ENCODE measurements at regions of chr1 and their contacts with region 1.

Region 1: DNA sequence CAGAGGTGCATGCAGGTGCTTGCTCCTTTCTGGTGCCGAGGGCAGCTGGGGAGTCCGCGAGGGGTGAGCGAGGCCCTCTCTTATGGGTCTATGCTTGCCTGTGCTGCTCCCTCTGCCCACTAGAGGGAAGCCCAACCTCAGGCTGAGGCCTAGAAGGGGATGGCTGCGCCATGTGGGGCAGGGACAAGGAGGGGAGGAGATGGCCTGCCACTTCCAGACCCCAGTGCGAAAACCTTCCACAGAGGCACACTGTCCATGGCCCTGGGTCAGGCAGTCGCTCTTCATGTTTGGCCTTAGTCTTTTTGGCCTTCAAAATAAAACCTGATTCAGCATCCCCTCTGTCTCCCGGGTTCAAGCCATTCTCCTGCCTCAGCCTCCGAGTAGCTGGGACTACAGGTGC is 14.0 kb downstream of the RHBG start:
- DNase-seq: peak in 1 of 2 donors; percentile 35
- ATAC-seq: peak in 1 of 2 donors; percentile 69
- H3K4me3 ChIP-seq: no peak overlapping the region
- H3K27ac ChIP-seq: no peak overlapping the region
- H3K4me1 ChIP-seq: no peaks in the 10 kb centered on the region
- H3K27me3 ChIP-seq: peaks cover 4 to 10% (median 4%) of the 10 kb centered on the region in 3 donors
- CTCF ChIP-seq: peak; percentile 43 to 71 (median 64)
- POLR2A ChIP-seq: no peak

Region 2: DNA sequence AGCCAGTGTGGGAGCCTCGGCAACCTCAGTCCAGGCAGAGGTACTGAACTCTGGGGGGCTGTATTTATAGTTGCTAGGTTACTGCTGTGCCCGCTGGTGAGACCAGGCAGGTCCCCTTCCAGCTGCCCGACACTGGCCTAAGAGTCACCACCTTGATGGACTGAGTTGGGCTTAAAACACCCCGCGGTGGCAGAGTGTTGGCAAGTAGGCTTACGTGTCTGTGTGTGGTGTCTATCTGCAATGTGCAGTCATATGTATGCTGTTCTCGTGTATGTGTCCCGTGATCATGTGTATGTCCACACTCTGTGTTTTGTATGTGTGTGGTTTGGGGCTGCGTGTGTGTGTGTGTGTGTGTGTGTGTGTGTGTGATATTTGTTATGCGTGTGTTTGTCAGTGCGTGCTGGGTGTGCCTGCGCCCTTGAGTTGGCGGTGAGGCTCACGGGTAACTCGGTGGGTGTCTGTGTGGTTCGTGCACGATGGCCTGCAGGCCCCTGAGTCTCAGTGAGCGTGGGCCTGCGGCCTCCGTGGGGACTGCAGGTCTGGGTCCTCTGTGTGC is 52.0 kb after region 1 on chr1:
- in situ Hi-C with region 1: loop called (anchors 5 kb)
- intact Hi-C with region 1: no loop called
- DNase-seq: no peak
- ATAC-seq: no peak
- H3K4me3 ChIP-seq: peak overlapping the region in 3 of 4 donors; percentile 34 to 57 (median 52)
- H3K27ac ChIP-seq: no peak overlapping the region
- H3K4me1 ChIP-seq: peaks cover 10 to 16% of the 10 kb centered on the region in 2 donors
- H3K27me3 ChIP-seq: peaks cover 89 to 97% (median 97%) of the 10 kb centered on the region in 3 donors
- CTCF ChIP-seq: no peak
- POLR2A ChIP-seq: no peak

Region 3: DNA sequence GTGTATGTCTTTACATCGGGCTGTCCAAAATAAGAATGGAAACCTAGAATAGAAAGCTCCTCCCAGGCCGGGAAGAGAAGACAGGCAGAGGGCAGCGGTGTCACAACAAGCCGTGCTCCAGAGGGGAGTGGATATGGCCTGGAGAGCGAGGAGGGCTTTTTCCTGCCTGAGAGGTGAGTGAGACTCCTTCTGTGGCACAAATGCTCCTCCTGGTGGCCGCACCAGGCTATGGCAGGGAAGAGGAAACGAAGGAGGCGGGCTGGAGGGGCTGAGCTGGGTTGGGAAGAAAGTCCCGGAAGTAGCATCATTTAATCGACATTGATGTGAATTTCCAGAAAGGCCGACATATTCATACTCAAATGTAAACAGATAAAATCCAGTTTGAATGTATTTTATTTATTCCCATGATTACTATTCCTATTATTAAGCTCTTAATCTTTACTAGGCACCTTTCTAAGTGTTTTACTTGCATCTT is 62.8 kb after region 1 on chr1:
- in situ Hi-C with region 1: loop called in 3 of 4 experiments (anchors 5 kb)
- intact Hi-C with region 1: loop called (anchors 1 kb)
- DNase-seq: peak; percentile 46 to 72
- ATAC-seq: peak; percentile 78 to 94
- H3K4me3 ChIP-seq: peak overlapping the region in 1 of 4 donors; percentile 18
- H3K27ac ChIP-seq: no peak overlapping the region
- H3K4me1 ChIP-seq: no peaks in the 10 kb centered on the region
- H3K27me3 ChIP-seq: peaks cover 27 to 41% (median 40%) of the 10 kb centered on the region in 3 donors
- CTCF ChIP-seq: peak; percentile 88 to 95 (median 92)
- POLR2A ChIP-seq: no peak

Region 4: DNA sequence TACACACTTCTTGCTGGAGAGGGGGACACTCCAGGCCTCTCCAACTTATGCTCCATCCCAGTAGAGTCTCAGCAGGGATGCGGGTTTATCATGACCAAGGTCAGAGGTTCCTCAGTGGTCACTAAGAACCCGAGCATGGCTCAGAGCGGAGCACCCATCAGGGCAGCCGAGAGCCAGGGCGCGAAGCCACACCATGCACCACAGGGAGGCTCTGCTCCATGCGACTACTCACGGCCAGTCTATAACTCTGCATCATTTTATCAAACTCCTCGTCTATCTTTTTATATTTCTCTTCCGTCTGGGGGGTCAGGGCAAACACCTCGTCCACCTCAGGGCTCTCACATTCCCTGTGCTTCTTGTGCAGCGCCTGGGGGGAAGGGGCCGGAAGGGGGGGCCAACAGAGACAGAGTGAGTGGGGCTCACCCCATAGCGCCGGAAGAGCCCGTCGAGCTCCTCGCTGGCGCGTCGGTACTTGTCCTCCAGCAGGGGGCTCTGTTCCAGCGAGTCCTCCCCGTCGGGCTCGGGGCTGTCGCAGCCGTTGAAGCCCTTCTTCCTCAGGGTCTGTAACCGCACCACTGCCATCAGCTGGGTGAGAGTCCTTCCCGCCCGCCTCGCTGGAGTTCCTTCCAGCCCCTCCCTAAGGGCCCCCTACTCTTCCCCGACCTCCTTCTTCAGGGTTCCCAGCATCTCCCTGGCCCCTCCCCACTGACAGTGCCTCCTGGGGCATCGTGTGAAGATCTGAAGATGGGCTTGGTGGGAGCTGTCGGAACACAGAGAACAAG is 97.6 kb after region 1 on chr1:
- in situ Hi-C with region 1: no loop called
- intact Hi-C with region 1: no loop called
- DNase-seq: peak in 1 of 2 donors; percentile 61
- ATAC-seq: no peak
- H3K4me3 ChIP-seq: no peak overlapping the region
- H3K27ac ChIP-seq: peak overlapping the region; percentile 96 to 99 (median 98)
- H3K4me1 ChIP-seq: peaks cover 95 to 100% of the 10 kb centered on the region in 2 donors
- H3K27me3 ChIP-seq: no peaks in the 10 kb centered on the region
- CTCF ChIP-seq: peak; percentile 56 to 79 (median 72)
- POLR2A ChIP-seq: no peak

Region 5: DNA sequence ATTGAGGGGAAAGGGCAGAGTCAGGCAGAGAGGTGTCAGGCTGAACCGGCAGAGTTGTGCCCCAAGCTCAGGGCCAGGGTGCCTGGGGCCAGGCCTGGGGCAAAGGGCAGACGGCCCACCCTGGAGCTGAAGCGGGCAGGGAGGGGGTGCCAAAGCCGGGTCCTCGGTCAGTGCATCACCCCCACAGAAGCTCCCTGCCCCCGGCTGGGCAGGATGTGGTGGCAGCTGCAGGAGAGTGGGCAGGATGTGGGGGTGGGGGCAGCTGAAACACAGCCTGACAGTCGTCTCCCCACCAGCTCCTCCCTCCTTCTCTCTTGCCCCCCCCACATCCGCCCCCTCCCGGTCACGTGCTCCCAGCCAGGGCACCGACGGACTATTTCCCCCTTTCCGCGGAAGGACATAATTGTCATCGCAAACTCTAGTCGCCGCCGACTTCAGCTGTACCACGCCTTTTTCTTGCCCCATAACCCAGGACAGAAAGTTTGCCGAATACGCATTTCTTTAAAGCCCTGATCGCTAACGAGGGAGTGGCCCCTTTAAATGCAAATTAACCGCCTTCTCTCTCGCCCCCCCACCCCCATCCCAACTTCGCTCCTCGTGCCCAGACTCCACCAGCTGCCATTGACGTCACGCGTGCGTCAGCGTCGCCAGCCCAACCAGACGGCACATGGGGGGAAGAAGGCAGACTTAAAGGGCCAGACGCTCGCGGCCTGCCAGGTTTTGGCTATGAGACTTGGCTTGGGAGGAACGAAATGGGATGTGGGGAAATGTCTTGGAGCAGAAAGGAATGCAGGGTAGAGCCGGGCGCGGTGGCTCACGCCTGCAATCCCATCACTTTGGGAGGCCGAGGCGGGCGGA is 122.0 kb after region 1 on chr1:
- in situ Hi-C with region 1: no loop called
- intact Hi-C with region 1: no loop called
- DNase-seq: peak; percentile 99 to 100
- ATAC-seq: peak; percentile 34 to 42
- H3K4me3 ChIP-seq: peak overlapping the region; percentile 48 to 92 (median 64)
- H3K27ac ChIP-seq: peak overlapping the region; percentile 96 to 99 (median 98)
- H3K4me1 ChIP-seq: peaks cover 50 to 69% of the 10 kb centered on the region in 2 donors
- H3K27me3 ChIP-seq: no peaks in the 10 kb centered on the region
- CTCF ChIP-seq: peak in 1 of 5 experiments; percentile 38
- POLR2A ChIP-seq: no peak

Region 6: DNA sequence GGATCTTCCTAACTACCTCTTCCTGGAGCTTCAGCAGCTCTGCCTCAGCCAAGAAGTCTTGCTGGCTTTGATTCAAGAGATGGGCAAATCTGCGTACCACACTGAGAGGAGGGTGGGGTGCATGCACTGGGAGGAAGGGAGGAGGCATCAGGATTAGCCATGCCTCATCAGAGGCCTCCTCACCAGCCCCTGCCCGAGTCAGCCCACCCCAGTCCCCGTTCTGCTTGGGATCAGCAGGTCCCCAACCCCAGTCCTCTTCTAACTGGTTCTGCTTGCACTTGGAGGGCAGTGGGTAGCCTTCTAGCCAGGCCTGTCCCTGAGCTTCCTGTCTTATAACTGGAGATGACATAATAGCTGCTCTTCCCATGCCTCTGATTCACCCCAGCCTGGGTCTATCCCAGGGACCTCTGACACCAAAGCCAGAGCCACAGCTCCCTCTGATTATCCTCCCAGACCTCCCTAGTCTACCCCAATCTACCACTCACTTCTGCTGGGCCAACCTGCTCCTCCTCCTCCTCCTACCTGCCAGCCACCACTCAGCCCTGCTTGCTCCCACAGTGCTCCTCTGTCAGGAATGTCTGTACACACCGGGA is 157.9 kb after region 1 on chr1:
- in situ Hi-C with region 1: no loop called
- intact Hi-C with region 1: loop called (anchors 10 kb)
- DNase-seq: peak in 1 of 2 donors; percentile 10
- ATAC-seq: peak in 1 of 2 donors; percentile 43
- H3K4me3 ChIP-seq: no peak overlapping the region
- H3K27ac ChIP-seq: no peak overlapping the region
- H3K4me1 ChIP-seq: no peaks in the 10 kb centered on the region
- H3K27me3 ChIP-seq: no peaks in the 10 kb centered on the region
- CTCF ChIP-seq: no peak
- POLR2A ChIP-seq: no peak

Region 7: DNA sequence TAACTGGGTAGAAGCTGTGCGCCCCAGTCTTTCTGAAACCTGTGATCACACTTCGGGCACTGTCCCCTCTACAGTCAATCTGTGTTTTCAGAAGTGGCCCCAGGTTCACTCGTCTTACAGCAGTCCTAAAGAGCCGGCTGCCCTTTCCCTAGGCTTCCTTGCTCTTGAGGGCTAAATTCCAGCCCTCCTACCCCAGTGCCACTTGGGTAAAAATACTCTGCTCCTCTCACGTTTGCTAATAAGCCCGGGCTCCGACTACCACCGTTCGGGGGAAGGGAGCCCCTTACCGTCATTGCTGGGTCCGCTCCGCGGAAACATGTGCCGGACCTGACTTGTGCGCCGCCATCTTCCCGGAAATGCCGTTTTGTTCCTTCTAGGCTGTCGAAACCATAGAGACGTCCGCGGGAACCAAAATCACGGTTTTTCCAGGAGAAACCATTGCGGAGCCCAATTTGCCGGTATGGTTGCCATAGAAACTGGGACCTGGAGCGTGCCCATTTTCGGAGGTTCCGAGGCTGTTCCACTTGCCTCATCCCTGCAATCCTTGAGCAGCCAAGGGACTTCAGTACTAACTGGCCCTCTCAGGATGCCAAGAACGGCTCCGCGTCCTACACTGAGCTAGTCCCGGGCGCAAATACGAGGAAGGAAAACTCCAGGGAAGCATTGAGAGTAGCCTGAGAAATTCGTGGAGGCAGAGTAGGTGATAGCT is 218.3 kb after region 1 on chr1 and contains the start of gene GPATCH4:
- in situ Hi-C with region 1: loop called in 3 of 4 experiments (anchors 10 kb)
- intact Hi-C with region 1: no loop called
- DNase-seq: peak; percentile 61 to 66
- ATAC-seq: peak; percentile 88 to 90
- H3K4me3 ChIP-seq: peak within 1 kb of the TSS; percentile 63 to 88 (median 82)
- H3K27ac ChIP-seq: peak within 1 kb of the TSS; percentile 77 to 87 (median 82)
- H3K4me1 ChIP-seq: peaks cover 15 to 16% of the 10 kb centered on the region in 2 donors
- H3K27me3 ChIP-seq: no peaks in the 10 kb centered on the region
- CTCF ChIP-seq: no peak
- POLR2A ChIP-seq: peak in 1 of 2 donors; percentile 30
- total RNA-seq, gene GPATCH4: 35.6 to 103 (median 47.6) TPM

Region 8: DNA sequence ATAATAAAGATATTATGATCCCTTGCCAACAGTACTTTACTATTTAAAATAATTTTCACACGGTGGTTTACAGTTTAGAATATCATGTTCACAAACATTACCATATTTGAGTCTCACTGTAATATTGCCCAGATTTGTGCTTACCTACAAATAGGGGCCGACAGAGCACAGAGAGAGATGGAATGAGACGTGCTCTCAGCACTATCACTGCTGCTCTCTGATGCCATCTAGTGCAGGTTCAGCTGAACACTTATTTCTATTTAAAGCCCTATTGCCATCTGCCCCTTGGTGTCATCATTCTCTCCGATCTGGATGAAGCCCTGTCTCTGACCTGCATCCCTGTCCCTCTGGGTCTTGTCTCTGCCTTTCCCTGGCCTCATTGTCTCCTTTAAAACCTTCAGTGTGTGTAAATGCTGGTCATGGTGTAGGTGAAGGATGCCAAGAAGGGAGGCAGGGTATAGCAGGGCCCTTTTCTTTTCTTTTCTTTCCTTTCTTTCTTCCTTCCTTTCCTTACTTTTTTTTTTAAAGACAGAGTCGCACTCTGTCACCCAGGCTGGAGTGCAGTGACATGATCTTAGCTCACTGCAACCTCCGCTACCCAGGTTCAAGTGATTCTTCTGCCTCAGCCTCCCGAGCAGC is 225.1 kb after region 1 on chr1:
- in situ Hi-C with region 1: loop called (anchors 10 kb)
- intact Hi-C with region 1: loop called (anchors 1 kb)
- DNase-seq: peak; percentile 48 to 59
- ATAC-seq: peak; percentile 99 to 100
- H3K4me3 ChIP-seq: no peak overlapping the region
- H3K27ac ChIP-seq: no peak overlapping the region
- H3K4me1 ChIP-seq: no peaks in the 10 kb centered on the region
- H3K27me3 ChIP-seq: no peaks in the 10 kb centered on the region
- CTCF ChIP-seq: peak; percentile 73 to 81 (median 80)
- POLR2A ChIP-seq: no peak

Region 9: DNA sequence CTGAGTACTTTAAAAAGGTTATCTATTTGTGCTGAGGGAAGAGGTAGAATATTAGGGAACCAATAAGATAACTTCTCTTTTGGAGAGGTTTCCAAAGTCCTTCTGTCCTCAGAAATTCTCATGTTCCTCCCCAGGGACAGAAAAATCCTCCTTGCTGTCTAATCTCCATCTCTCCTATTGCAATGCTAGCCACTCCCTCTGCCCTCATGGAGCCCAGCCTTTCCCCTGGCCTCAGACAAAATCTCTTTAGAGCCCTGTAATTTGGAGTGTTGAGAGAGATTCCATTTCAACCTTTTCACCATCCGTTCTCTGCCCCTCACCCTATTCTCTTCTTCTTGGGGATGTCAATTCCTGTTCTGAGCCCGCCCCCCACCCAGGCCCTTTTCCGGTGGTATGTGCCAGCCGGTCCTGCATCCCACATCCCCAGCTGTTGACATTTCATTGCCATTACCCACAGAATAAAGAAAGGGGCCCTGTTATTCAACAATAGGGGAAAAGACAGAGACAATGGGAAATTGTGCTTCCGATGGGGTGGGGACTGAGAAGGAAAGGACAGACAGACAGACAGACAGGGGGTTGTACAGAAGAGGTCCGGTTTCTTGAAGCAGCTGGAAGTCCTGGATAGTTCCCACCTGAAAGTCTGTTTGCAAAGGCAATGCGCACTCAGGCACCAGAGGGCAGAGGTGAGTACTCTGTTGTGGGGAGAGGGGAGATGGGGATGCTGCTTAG is 236.0 kb after region 1 on chr1 and contains the start of gene HAPLN2:
- in situ Hi-C with region 1: loop called in 1 of 4 experiments (anchors 10 kb)
- intact Hi-C with region 1: no loop called
- DNase-seq: no peak
- ATAC-seq: no peak
- H3K4me3 ChIP-seq: no peak within 1 kb of the TSS
- H3K27ac ChIP-seq: peak within 1 kb of the TSS in 2 of 4 donors; percentile 28 to 47
- H3K4me1 ChIP-seq: peaks cover 1 to 9% of the 10 kb centered on the region in 2 donors
- H3K27me3 ChIP-seq: peaks cover 14 to 26% (median 20%) of the 10 kb centered on the region in 3 donors
- CTCF ChIP-seq: peak in 1 of 5 experiments; percentile 36
- POLR2A ChIP-seq: no peak
- total RNA-seq, gene HAPLN2: 0.53 to 6.0 (median 3.0) TPM

Measured in gastrocnemius medialis (tissue), 4 donors.